Endothelial cell of umbilical vein (primary cell): ENCODE measurements at regions of chr10 and their contacts with region 1.

Region 1: GRCh38 chr10:101889256-101890210 is 45.9 kb upstream of the KCNIP2 start:
- DNase-seq: peak; percentile 81
- H3K4me3 ChIP-seq: no peak overlapping the region
- H3K27ac ChIP-seq: no peak overlapping the region
- H3K4me1 ChIP-seq: no peaks in the 10 kb centered on the region
- H3K27me3 ChIP-seq: no peaks in the 10 kb centered on the region
- CTCF ChIP-seq: peak; percentile 81 to 84
- POLR2A ChIP-seq: no peak

Region 2: DNA sequence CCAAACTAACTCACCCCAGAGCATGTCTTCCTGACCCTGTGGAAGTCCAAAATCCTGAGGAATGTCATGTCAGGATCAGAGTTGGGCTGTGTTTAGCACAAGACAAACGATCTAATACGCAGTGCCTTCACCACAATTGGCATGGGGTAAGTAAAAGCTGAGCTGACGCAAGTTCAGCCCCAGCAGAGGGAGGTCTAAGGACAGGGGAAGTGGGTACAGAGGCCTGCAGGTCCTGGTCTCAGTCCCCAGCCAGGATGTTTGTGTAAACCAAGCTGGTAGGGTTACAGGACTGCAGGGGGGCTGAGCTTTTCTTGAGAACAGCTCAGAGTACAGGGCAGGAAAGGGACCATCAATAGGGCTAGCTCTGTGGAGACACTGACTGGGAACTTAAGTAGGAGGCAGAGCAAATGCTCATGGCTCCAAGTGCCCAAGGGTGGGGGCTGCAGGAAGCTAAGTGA is 40.6 kb before region 1 on chr10:
- CTCF ChIA-PET with region 1: interaction called, 22 read pairs
- POLR2A ChIA-PET with region 1: no interaction called
- dilution Hi-C with region 1: no loop called
- intact Hi-C with region 1: no loop called
- DNase-seq: no peak
- H3K4me3 ChIP-seq: no peak overlapping the region
- H3K27ac ChIP-seq: peak overlapping the region; percentile 71
- H3K4me1 ChIP-seq: peaks cover 26% of the 10 kb centered on the region
- H3K27me3 ChIP-seq: no peaks in the 10 kb centered on the region
- CTCF ChIP-seq: no peak
- POLR2A ChIP-seq: no peak

Region 3: GRCh38 chr10:101901340-101901739 is 11.8 kb after region 1 on chr10:
- CTCF ChIA-PET with region 1: interaction called, 24 read pairs
- POLR2A ChIA-PET with region 1: no interaction called
- dilution Hi-C with region 1: no loop called
- intact Hi-C with region 1: no loop called
- DNase-seq: no peak
- H3K4me3 ChIP-seq: no peak overlapping the region
- H3K27ac ChIP-seq: no peak overlapping the region
- H3K4me1 ChIP-seq: no peaks in the 10 kb centered on the region
- H3K27me3 ChIP-seq: no peaks in the 10 kb centered on the region
- CTCF ChIP-seq: no peak
- POLR2A ChIP-seq: no peak

Region 4: DNA sequence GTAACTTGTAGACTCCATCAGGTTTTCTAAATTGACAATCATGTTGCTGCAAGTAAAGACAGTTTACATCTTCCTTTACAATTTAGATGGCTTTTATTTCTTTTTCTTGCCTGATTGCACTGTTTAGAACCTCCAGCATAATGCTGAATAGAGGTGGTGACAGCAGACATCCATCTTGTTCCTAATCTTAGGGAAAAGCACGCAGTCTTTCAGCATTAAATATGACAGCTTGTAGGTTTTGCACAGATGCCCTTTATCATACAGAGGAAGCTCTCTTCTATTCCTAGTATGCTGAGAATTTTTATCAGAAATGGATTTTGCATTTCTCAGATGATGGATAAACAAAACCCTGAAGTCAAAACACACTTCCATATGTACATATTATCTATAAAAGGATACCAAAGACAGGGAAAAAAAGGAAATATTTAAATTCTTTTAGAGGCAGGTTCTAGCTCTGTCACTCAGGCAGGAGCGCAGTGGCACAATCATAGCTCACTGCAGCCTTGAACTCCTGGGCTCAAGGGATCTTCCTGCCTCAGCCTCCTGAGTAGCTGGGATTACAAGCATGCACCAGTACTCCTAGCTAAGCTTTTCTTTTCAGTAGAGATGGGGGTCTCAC is 23.1 kb after region 1 on chr10:
- CTCF ChIA-PET with region 1: interaction called, 12 read pairs
- POLR2A ChIA-PET with region 1: no interaction called
- dilution Hi-C with region 1: no loop called
- intact Hi-C with region 1: no loop called
- DNase-seq: no peak
- H3K4me3 ChIP-seq: no peak overlapping the region
- H3K27ac ChIP-seq: no peak overlapping the region
- H3K4me1 ChIP-seq: no peaks in the 10 kb centered on the region
- H3K27me3 ChIP-seq: no peaks in the 10 kb centered on the region
- CTCF ChIP-seq: no peak
- POLR2A ChIP-seq: no peak

Region 5: DNA sequence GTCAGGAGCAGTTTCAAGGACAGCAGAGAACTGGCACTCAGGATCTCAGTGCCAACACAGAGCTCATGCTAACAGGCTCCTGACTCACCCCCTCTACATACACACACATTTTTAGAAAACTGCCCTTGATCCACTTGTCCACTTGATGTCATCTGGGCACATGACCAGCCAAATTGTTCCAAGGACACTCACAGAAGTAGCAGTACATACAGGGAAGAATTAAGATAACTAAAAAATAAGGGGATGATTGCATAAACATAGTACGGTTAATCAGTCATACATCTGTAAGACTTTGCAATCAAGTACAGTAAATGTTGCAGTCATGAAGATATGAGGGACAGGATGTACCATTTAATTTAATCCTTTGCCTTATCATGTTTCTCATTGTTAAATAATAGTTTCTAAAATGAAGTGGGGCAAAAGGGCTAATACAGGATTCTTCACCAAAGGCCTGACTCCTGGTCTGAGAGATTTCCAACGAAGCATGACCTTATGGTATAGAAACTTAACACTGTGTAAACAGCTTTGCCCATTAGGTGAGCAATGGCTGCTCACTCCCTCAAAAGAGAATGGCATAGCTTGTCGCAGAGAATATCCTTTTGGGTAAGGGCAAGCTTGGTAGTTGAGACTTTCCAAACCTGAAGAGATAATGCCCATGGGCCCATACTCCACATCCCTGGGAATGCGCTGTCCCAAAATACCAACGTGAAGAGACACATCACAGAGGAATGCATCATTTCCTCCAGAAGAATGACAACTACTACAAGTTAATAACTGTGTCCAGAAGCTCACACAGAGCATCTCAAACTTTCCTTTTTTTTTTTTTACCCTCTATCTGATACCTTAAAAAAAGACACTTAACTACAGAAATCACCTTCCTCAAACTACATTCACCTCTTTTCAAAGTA is 72.3 kb after region 1 on chr10:
- CTCF ChIA-PET with region 1: interaction called, 20 read pairs
- POLR2A ChIA-PET with region 1: no interaction called
- dilution Hi-C with region 1: no loop called
- intact Hi-C with region 1: no loop called
- DNase-seq: no peak
- H3K4me3 ChIP-seq: no peak overlapping the region
- H3K27ac ChIP-seq: no peak overlapping the region
- H3K4me1 ChIP-seq: peaks cover 7% of the 10 kb centered on the region
- H3K27me3 ChIP-seq: no peaks in the 10 kb centered on the region
- CTCF ChIP-seq: no peak
- POLR2A ChIP-seq: no peak

Region 6: GRCh38 chr10:101986625-101986973 is 97.1 kb after region 1 on chr10:
- CTCF ChIA-PET with region 1: interaction called, 4 read pairs
- POLR2A ChIA-PET with region 1: no interaction called
- dilution Hi-C with region 1: loop called (anchors 25 kb)
- intact Hi-C with region 1: no loop called
- DNase-seq: peak; percentile 47
- H3K4me3 ChIP-seq: no peak overlapping the region
- H3K27ac ChIP-seq: no peak overlapping the region
- H3K4me1 ChIP-seq: peaks cover 7% of the 10 kb centered on the region
- H3K27me3 ChIP-seq: no peaks in the 10 kb centered on the region
- CTCF ChIP-seq: no peak
- POLR2A ChIP-seq: no peak

Region 7: DNA sequence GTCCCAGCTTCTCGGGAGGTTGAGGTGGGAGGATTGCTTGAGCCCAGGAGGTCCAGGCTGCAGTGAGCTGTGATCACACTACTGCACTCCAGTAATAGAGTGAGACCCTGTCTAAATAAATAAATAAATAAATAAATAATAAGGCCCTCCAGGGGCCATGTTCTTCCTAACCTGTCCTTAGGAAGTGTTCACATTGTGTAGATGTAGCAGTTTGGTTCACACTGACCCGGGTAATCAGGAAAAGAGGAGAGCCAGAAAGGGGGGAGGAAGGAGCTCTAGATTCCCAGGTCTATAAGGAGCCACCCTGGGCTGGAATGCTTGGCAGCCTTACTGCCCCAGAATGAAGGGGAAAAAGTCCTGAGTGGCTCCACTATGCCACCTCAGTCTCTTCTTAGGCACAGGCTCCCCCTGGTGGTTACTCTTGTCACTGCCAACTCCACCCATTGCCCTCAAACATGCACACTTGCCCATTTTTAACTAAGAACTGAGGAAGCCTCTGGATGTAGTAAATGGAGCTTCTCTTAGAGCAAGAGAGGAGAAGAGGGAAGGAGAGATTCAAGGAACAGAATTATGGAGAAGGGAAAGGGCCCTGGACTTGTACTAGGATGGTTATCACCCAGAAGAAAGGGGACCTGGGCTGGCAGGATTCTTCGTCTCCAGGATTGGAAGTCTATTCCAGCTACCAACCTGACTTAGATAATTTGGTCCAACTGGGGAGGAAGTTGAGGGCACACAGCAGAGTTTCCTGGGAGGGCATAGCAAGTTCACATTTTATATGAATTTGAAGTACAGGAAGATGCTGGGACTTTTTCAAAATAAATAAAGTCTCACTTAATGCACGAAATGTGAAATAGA is 183.4 kb after region 1 on chr10:
- CTCF ChIA-PET with region 1: interaction called, 15 read pairs
- POLR2A ChIA-PET with region 1: no interaction called
- dilution Hi-C with region 1: no loop called
- intact Hi-C with region 1: loop called (anchors 1 kb)
- DNase-seq: peak; percentile 81
- H3K4me3 ChIP-seq: no peak overlapping the region
- H3K27ac ChIP-seq: no peak overlapping the region
- H3K4me1 ChIP-seq: no peaks in the 10 kb centered on the region
- H3K27me3 ChIP-seq: peaks cover 0 to 2% of the 10 kb centered on the region in 2 experiments
- CTCF ChIP-seq: peak; percentile 91 to 98
- POLR2A ChIP-seq: no peak